CD4-positive, alpha-beta T cell (primary cell): ENCODE measurements at regions of chr13 and their contacts with region 1.

Region 1: GRCh38 chr13:74062933-74063332 is 71.3 kb downstream of the KLF12 start:
- DNase-seq: peak in 4 of 14 experiments; percentile 10 to 65 (median 34)
- ATAC-seq: peak; percentile 9
- H3K4me3 ChIP-seq: peak overlapping the region; percentile 24
- H3K4me3 Mint-ChIP-seq: peak overlapping the region; percentile 35
- H3K27ac ChIP-seq: peak overlapping the region; percentile 48 to 70
- H3K27ac Mint-ChIP-seq: peak overlapping the region; percentile 80
- H3K4me1 ChIP-seq: peaks cover 37% of the 10 kb centered on the region
- H3K4me1 Mint-ChIP-seq: peaks cover 89% of the 10 kb centered on the region
- H3K27me3 ChIP-seq: no peaks in the 10 kb centered on the region
- H3K27me3 Mint-ChIP-seq: no peaks in the 10 kb centered on the region
- CTCF ChIP-seq: no peak

Region 2: GRCh38 chr13:74015137-74015536 is 47.8 kb before region 1 on chr13:
- CTCF ChIA-PET with region 1: no interaction called
- POLR2A ChIA-PET with region 1: no interaction called
- intact Hi-C with region 1: no loop called
- DNase-seq: no peak
- ATAC-seq: peak; percentile 52
- H3K4me3 ChIP-seq: no peak overlapping the region
- H3K4me3 Mint-ChIP-seq: no peak overlapping the region
- H3K27ac ChIP-seq: no peak overlapping the region
- H3K27ac Mint-ChIP-seq: no peak overlapping the region
- H3K4me1 ChIP-seq: peaks cover 14% of the 10 kb centered on the region
- H3K4me1 Mint-ChIP-seq: peaks cover 97% of the 10 kb centered on the region
- H3K27me3 ChIP-seq: no peaks in the 10 kb centered on the region
- H3K27me3 Mint-ChIP-seq: no peaks in the 10 kb centered on the region
- CTCF ChIP-seq: no peak

Region 3: DNA sequence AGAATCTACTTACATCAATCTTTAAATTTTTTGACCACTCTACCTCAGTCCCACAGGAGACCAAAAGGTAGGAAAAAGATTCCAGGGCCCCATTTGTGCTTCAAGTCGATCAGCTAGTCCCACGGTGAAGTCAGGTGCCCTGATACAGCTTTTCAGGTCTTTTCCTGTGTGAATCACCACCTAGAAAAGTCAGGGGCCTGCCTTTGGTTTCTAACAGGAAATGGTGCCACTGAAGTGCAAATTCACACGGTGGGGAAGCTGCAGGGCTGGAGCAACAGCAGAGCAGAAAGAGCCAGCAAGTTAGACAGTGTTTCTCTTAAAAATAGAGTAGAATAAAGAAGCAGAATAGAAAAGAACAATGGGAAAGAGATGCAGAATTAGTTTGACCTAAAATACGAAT is 36.2 kb before region 1 on chr13:
- CTCF ChIA-PET with region 1: no interaction called
- POLR2A ChIA-PET with region 1: interaction called, 8 read pairs
- intact Hi-C with region 1: loop called in 1 of 2 experiments (anchors 5 kb)
- DNase-seq: peak; percentile 44 to 88 (median 66)
- ATAC-seq: peak; percentile 95
- H3K4me3 ChIP-seq: peak overlapping the region; percentile 29
- H3K4me3 Mint-ChIP-seq: peak overlapping the region; percentile 82
- H3K27ac ChIP-seq: peak overlapping the region; percentile 66 to 78
- H3K27ac Mint-ChIP-seq: peak overlapping the region; percentile 89
- H3K4me1 ChIP-seq: peaks cover 11% of the 10 kb centered on the region
- H3K4me1 Mint-ChIP-seq: peaks cover 90% of the 10 kb centered on the region
- H3K27me3 ChIP-seq: no peaks in the 10 kb centered on the region
- H3K27me3 Mint-ChIP-seq: no peaks in the 10 kb centered on the region
- CTCF ChIP-seq: no peak

Region 4: DNA sequence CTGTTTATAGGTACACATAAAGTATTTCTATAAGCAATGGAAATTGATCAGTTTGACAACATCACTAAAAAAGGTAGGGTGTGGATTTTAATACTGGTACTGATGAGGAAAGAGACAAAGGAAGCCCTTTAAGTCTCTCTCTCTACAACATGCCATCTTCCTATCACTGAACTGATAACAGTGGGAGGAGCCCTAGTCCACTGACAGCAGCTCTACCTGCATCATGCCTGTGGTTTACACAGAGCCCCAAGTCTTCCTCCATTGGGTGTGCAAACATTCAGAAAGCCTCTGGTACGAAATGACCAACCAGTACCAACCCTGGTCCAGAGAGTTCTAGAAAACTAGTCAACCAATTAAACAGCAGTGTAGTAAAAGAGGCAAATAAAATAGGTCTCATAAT is 17.8 kb after region 1 on chr13:
- CTCF ChIA-PET with region 1: no interaction called
- POLR2A ChIA-PET with region 1: no interaction called
- intact Hi-C with region 1: no loop called
- DNase-seq: peak in 4 of 14 experiments; percentile 27 to 66 (median 40)
- ATAC-seq: peak; percentile 74
- H3K4me3 ChIP-seq: no peak overlapping the region
- H3K4me3 Mint-ChIP-seq: no peak overlapping the region
- H3K27ac ChIP-seq: no peak overlapping the region
- H3K27ac Mint-ChIP-seq: peak overlapping the region; percentile 45
- H3K4me1 ChIP-seq: peaks cover 20% of the 10 kb centered on the region
- H3K4me1 Mint-ChIP-seq: peaks cover 86% of the 10 kb centered on the region
- H3K27me3 ChIP-seq: no peaks in the 10 kb centered on the region
- H3K27me3 Mint-ChIP-seq: no peaks in the 10 kb centered on the region
- CTCF ChIP-seq: no peak

Region 5: GRCh38 chr13:74098077-74098476 is 35.1 kb after region 1 on chr13:
- CTCF ChIA-PET with region 1: no interaction called
- POLR2A ChIA-PET with region 1: no interaction called
- intact Hi-C with region 1: loop called in 1 of 2 experiments (anchors 5 kb)
- DNase-seq: no peak
- ATAC-seq: no peak
- H3K4me3 ChIP-seq: no peak overlapping the region
- H3K4me3 Mint-ChIP-seq: no peak overlapping the region
- H3K27ac ChIP-seq: no peak overlapping the region
- H3K27ac Mint-ChIP-seq: peak overlapping the region; percentile 57
- H3K4me1 ChIP-seq: peaks cover 28% of the 10 kb centered on the region
- H3K4me1 Mint-ChIP-seq: peaks cover 75% of the 10 kb centered on the region
- H3K27me3 ChIP-seq: no peaks in the 10 kb centered on the region
- H3K27me3 Mint-ChIP-seq: no peaks in the 10 kb centered on the region
- CTCF ChIP-seq: no peak